ENCODE measurements at regions of chr2 and their contacts with region 1.

Region 1: DNA sequence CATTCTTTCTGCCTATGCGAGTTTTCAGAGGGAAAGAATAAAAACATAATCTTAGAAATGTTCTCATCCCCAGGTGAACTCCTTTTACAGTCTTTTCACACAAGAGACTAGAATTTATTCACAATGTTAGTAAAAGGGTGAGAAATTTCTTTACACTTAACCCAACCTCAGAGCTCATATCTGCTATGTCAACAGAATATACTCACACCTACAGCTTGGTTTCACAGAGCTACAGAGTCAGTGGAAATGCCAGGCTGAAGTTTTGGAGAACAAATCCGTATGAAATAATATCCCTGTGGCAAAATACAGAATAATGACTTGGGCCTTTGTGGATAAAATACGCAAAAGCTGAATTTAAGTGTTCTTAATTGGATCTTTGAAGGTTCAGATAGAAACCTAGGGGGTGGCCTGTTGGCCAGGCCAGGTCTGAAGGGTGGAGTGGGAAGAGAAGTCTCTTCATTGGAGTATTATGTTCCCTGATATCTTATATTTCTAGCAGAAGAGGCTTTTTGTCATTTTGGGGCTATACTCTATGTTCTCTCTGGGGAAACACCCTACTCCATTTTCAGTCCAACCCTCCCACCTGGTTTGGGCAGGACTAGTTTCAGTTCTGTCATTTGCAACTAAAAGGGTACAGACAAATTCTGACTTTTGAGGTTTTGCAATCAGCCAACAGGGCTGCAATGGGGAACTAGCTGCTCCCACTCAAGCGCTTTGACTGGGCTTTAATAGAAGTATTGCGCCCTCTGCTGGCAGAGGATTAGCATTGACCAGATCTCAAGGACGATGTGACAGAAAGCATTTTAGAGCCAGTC is 25.7 kb downstream of the FBXO48 start:
- DNase-seq: peak; percentile 80
- H3K4me3 ChIP-seq: no peak overlapping the region
- H3K27ac ChIP-seq: no peak overlapping the region
- H3K4me1 ChIP-seq: no peaks in the 10 kb centered on the region
- H3K27me3 ChIP-seq: no peaks in the 10 kb centered on the region
- CTCF ChIP-seq: peak; percentile 81

Region 2: DNA sequence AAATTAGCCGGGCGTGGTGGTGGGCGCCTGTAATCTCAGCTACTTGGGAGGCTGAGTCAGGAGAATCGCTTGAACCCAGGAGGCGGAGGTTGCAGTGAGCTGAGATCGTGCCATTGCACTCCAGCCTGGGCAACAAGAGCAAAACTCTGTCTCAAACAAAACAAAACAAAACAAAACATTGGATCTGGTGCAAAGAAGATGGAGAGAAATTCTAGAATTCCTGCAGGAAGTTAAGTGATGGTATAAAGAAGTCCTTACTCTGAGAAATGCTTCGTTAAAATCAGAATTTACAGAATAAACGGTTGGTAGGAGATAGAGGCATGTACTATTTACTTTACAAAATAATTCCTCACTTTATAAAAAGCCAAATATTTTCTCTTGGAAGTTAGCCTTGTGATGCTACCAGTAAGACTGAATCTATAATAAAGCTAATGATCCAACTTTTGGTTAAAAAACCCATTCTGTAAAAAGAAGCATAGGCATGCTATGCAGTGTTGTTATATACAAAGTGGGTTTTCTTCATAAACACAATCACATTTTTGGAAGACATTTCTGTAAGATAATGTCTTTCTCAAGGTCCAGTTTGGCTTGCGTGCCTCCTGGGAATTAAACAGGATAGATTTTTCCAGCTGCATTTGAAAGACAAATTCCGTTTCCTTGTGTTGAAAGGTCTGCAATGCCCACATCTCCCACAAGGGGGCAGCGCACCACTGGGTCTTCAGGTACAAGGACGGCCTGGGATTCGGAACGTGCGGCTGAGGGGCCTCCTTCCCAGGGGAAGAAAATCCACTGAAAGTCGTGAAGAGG is 319.3 kb before region 1 on chr2:
- intact Hi-C with region 1: loop called (anchors 5 kb)
- DNase-seq: peak; percentile 89
- H3K4me3 ChIP-seq: no peak overlapping the region
- H3K27ac ChIP-seq: no peak overlapping the region
- H3K4me1 ChIP-seq: no peaks in the 10 kb centered on the region
- H3K27me3 ChIP-seq: no peaks in the 10 kb centered on the region
- CTCF ChIP-seq: peak; percentile 98

Region 3: GRCh38 chr2:68365087-68365486 is 76.3 kb before region 1 on chr2 and contains the start of gene PLEK:
- intact Hi-C with region 1: loop called (anchors 5 kb)
- DNase-seq: peak; percentile 46
- H3K4me3 ChIP-seq: peak within 1 kb of the TSS; percentile 22
- H3K27ac ChIP-seq: peak within 1 kb of the TSS; percentile 38
- H3K4me1 ChIP-seq: no peaks in the 10 kb centered on the region
- H3K27me3 ChIP-seq: no peaks in the 10 kb centered on the region
- CTCF ChIP-seq: no peak
- total RNA-seq, gene PLEK: 2.6 to 5.1 TPM